Activated CD4-positive, alpha-beta T cell treated with anti-CD3 and anti-CD28 coated beads for 36 hours (primary cell): ENCODE measurements at regions of chr1 and their contacts with region 1.

Region 1: DNA sequence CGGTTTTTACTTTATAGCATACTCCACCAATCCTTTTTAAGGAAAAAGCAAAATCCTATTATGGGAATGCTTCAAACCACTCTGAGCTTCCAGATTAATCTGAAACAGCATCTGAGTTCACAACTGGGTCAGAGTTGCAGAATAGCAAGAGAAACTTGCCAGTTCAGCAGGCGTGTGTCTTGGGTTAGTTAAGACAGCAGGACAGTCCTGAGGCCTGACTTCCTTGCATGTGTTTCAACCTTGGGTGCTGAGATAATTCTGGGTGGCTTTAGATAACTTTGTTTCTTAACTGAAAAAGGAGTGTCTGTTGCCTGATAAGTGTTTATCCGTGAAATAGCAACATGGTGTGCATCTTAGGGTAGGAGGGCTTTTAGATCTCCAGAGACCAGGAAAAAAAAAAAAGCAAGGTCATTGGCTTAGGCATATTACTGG is 169.2 kb downstream of the DHRS3 start:
- DNase-seq: no peak
- ATAC-seq: no peak
- H3K4me3 Mint-ChIP-seq: peak overlapping the region; percentile 24
- H3K27ac Mint-ChIP-seq: peak overlapping the region; percentile 76
- H3K4me1 Mint-ChIP-seq: peaks cover 69% of the 10 kb centered on the region
- H3K27me3 Mint-ChIP-seq: peaks cover 10% of the 10 kb centered on the region

Region 2: GRCh38 chr1:12059722-12060464 is 388.9 kb before region 1 on chr1:
- CTCF ChIA-PET with region 1: no interaction called
- POLR2A ChIA-PET with region 1: no interaction called
- intact Hi-C with region 1: loop called in 1 of 2 experiments (anchors 5 kb)
- DNase-seq: peak; percentile 67
- ATAC-seq: peak; percentile 56
- H3K4me3 Mint-ChIP-seq: peak overlapping the region; percentile 3
- H3K27ac Mint-ChIP-seq: peak overlapping the region; percentile 56
- H3K4me1 Mint-ChIP-seq: peaks cover 71% of the 10 kb centered on the region
- H3K27me3 Mint-ChIP-seq: peaks cover 29% of the 10 kb centered on the region

Region 3: GRCh38 chr1:12296623-12297022 is 152.1 kb before region 1 on chr1:
- CTCF ChIA-PET with region 1: no interaction called
- POLR2A ChIA-PET with region 1: no interaction called
- intact Hi-C with region 1: loop called (anchors 1 kb)
- DNase-seq: no peak
- ATAC-seq: peak; percentile 90
- H3K4me3 Mint-ChIP-seq: no peak overlapping the region
- H3K27ac Mint-ChIP-seq: no peak overlapping the region
- H3K4me1 Mint-ChIP-seq: peaks cover 22% of the 10 kb centered on the region
- H3K27me3 Mint-ChIP-seq: no peaks in the 10 kb centered on the region

Region 4: DNA sequence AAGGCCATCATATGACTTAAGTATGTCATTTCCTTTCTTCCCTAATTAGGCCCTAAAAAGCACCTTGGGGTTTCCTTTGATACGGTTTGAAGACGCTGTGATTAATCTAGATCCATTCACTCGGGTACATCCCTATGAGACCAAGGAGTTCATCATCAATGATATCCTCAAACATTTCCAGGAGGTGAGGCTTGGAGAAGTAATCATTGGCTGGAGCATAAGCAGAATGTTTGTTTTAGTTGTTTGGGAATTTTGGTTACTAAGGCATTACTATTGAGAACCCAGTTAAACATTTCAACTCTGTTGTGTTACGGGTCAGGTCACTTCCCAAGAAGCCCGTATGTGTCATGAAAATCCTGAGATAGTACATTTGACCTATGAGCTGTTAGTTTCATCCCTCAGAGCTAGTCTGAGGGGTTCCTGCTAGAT is 33.7 kb before region 1 on chr1:
- CTCF ChIA-PET with region 1: no interaction called
- POLR2A ChIA-PET with region 1: no interaction called
- intact Hi-C with region 1: loop called (anchors 1 to 2 kb)
- DNase-seq: no peak
- ATAC-seq: peak; percentile 70
- H3K4me3 Mint-ChIP-seq: no peak overlapping the region
- H3K27ac Mint-ChIP-seq: peak overlapping the region; percentile 29
- H3K4me1 Mint-ChIP-seq: peaks cover 36% of the 10 kb centered on the region
- H3K27me3 Mint-ChIP-seq: no peaks in the 10 kb centered on the region

Region 5: DNA sequence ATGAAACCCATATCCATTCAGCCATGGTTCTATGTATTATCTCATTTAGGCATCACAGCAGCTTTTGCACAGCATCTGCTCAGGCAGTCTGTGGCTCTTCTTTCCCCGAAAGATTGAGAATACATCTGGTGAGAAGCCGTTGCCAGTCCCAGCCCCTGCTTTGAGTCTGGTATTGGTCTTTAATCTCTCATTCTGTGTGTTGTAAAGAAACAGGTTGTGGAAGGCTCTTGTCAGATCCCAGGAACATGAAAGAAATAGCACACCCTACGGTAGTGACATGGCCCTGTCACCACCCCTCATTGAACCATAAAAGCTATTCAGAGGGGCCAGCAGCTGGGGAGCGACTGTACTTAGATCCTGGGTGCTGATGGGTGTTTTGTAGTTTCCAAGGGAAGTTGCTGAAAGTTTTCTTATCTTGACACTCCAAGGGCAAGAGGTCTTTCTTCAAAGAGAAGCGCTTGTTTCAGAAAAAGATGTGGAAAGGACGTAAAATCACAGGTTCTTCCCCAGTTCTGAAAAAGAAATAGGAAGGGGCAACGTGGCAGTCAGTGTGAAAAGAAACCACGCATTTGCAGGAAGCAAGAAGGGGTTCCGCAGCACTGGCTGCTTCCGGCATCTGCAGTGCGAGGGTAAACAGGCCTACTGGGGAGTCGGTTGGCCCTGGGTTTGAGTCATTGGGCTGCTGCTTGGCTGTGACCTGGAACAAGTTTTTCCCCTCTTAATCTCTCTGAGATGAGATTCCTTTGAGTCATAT is 24.2 kb after region 1 on chr1:
- CTCF ChIA-PET with region 1: interaction called, 4 read pairs
- POLR2A ChIA-PET with region 1: interaction called, 8 read pairs
- intact Hi-C with region 1: loop called (anchors 1 kb)
- DNase-seq: peak; percentile 91
- ATAC-seq: peak; percentile 94
- H3K4me3 Mint-ChIP-seq: peak overlapping the region; percentile 59
- H3K27ac Mint-ChIP-seq: peak overlapping the region; percentile 97
- H3K4me1 Mint-ChIP-seq: peaks cover 89% of the 10 kb centered on the region
- H3K27me3 Mint-ChIP-seq: no peaks in the 10 kb centered on the region

Region 6: DNA sequence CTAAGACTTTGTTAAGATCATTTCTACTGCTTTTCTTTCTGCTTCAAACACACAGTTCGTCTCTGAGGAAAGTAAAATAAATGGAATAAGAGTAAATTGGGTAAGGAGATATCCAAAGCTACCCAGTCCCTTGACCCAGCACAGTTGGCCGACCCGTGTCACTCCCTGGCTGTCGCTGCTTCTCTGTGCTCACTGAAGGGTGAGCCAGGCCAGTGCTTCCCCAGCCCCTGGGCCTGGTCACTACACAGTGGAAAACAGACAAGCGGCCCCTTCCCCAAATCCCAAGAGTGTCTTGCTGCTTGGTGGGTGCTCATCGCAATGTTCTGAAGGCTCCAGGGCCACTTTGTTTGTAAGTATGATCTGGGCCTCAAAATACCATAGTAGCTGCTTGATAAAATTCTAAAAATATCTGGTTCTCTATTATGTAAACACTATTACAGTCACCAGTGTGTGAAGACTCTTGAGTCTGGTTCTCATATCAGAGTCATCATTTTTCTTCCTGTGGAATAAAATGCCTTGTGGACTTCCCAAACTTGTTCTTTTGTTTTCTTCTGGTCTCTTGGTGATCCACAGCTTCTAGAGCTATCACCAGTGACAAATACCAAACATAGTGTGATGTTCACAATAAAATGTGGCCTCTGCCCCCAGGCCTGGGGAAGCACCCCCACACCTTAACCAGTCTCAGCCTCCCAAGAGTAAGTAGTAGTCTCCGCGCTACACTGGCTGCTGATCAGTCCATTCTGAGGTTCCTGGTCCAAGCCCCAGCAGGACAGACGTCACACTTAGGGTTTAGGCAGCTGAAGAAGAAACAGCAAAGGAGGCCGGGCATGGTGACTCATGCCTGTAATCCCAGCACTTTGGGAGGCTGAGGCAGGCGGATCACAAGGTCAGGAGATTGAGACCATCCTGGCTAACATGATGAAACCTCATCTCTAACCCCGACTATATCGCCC is 63.0 kb after region 1 on chr1:
- CTCF ChIA-PET with region 1: no interaction called
- POLR2A ChIA-PET with region 1: interaction called, 3 read pairs
- intact Hi-C with region 1: loop called (anchors 1 kb)
- DNase-seq: no peak
- ATAC-seq: no peak
- H3K4me3 Mint-ChIP-seq: peak overlapping the region; percentile 58
- H3K27ac Mint-ChIP-seq: peak overlapping the region; percentile 99
- H3K4me1 Mint-ChIP-seq: peaks cover 54% of the 10 kb centered on the region
- H3K27me3 Mint-ChIP-seq: no peaks in the 10 kb centered on the region

Region 7: GRCh38 chr1:12604114-12604874 is 155.5 kb after region 1 on chr1:
- CTCF ChIA-PET with region 1: no interaction called
- POLR2A ChIA-PET with region 1: no interaction called
- intact Hi-C with region 1: loop called (anchors 1 kb)
- DNase-seq: peak; percentile 85
- ATAC-seq: peak; percentile 97
- H3K4me3 Mint-ChIP-seq: peak overlapping the region; percentile 21
- H3K27ac Mint-ChIP-seq: peak overlapping the region; percentile 74
- H3K4me1 Mint-ChIP-seq: peaks cover 49% of the 10 kb centered on the region
- H3K27me3 Mint-ChIP-seq: no peaks in the 10 kb centered on the region